Naive thymus-derived CD4-positive, alpha-beta T cell (primary cell): ENCODE measurements at regions of chr17 and their contacts with region 1.

Region 1: DNA sequence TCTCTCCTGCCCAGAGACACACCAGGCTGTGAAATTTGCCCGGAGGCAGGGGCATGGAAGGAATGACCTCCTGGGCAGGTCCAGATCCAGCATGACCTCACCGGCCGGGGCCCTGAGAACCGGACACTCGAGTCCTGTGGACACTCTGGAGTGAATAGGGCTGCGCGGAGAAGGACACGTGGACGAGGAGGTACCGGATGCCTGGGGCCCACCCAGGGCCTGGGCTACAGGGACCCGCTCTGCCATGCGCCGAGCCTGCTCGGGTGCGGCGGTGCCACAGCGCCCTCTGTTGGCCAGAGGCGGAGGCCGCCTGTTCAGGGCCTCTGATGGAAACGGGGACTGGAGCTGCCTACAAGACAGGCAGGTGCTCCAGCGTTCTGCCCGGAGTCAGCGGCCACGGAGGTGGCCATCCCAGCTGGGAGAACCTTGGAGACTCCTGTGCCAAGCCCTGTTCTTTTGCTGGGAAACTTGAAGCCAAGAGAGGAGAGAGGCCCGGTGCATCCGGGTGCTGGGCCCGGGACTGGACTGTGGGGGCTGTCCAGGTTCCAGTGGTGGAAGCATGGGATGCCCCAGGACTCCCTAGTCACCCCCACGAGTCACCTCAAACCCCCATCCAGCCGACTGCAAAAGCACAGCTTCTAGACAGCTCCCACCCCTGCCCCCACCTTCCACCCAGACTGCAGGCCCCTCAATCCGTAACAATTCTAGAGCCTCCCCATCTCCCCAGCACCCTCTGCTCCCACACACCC is 19.3 kb upstream of the NXPH3 start:
- DNase-seq: peak; percentile 61 to 89 (median 81)
- ATAC-seq: peak; percentile 96
- H3K4me3 ChIP-seq: no peak overlapping the region
- H3K4me3 Mint-ChIP-seq: peak overlapping the region in 1 of 10 donors; percentile 52
- H3K27ac ChIP-seq: no peak overlapping the region
- H3K27ac Mint-ChIP-seq: no peak overlapping the region
- H3K4me1 ChIP-seq: peaks cover 0 to 3% of the 10 kb centered on the region in 2 donors
- H3K4me1 Mint-ChIP-seq: peaks cover 6 to 13% (median 10%) of the 10 kb centered on the region in 7 donors
- H3K27me3 ChIP-seq: peaks cover 0 to 3% of the 10 kb centered on the region in 2 donors
- H3K27me3 Mint-ChIP-seq: peaks cover 0 to 13% (median 5%) of the 10 kb centered on the region in 5 donors

Region 2: DNA sequence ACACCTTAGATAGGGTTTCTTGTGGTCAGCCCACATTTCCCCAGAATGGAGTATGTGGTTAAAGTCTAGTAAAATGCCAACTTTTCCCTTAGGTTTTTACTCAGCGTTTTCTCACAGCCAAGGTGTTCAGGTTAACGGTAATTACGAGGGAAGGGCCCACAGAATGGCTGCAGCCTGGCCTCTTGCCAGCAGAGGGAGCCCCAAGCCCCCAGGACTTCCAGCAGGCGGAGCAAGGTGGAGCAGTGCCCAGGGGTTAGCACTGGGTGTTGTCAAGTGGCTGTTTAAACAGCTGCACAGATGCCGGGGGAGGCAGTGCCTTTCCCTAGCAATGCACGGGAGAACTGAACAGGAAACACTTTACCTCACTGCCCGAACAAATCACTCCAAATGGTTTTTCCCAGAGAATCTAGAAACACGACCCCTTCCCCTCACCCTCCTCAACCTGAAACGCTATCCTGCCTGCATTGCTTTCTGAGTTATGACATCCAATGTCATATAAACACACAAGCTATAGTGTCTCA is 148.4 kb before region 1 on chr17:
- CTCF ChIA-PET with region 1: interaction called, 40 read pairs
- POLR2A ChIA-PET with region 1: interaction called, 5 read pairs
- intact Hi-C with region 1: loop called (anchors 1 kb)
- DNase-seq: peak; percentile 67 to 85 (median 81)
- ATAC-seq: peak; percentile 98
- H3K4me3 ChIP-seq: no peak overlapping the region
- H3K4me3 Mint-ChIP-seq: no peak overlapping the region
- H3K27ac ChIP-seq: no peak overlapping the region
- H3K27ac Mint-ChIP-seq: peak overlapping the region in 4 of 9 donors; percentile 12 to 66 (median 50)
- H3K4me1 ChIP-seq: peaks cover 0 to 20% of the 10 kb centered on the region in 2 donors
- H3K4me1 Mint-ChIP-seq: peaks cover 17 to 36% (median 31%) of the 10 kb centered on the region in 7 donors
- H3K27me3 ChIP-seq: no peaks in the 10 kb centered on the region
- H3K27me3 Mint-ChIP-seq: no peaks in the 10 kb centered on the region

Region 3: GRCh38 chr17:49434821-49435670 is 121.4 kb before region 1 on chr17:
- CTCF ChIA-PET with region 1: interaction called, 28 read pairs
- POLR2A ChIA-PET with region 1: no interaction called
- intact Hi-C with region 1: loop called in 1 of 2 experiments (anchors 1 kb)
- DNase-seq: peak in 4 of 9 donors; percentile 18 to 39 (median 30)
- ATAC-seq: peak; percentile 49
- H3K4me3 ChIP-seq: no peak overlapping the region
- H3K4me3 Mint-ChIP-seq: no peak overlapping the region
- H3K27ac ChIP-seq: no peak overlapping the region
- H3K27ac Mint-ChIP-seq: no peak overlapping the region
- H3K4me1 ChIP-seq: no peaks in the 10 kb centered on the region
- H3K4me1 Mint-ChIP-seq: peaks cover 0 to 3% (median 0%) of the 10 kb centered on the region in 7 donors
- H3K27me3 ChIP-seq: peaks cover 0 to 8% of the 10 kb centered on the region in 2 donors
- H3K27me3 Mint-ChIP-seq: peaks cover 15 to 43% (median 32%) of the 10 kb centered on the region in 5 donors

Region 4: DNA sequence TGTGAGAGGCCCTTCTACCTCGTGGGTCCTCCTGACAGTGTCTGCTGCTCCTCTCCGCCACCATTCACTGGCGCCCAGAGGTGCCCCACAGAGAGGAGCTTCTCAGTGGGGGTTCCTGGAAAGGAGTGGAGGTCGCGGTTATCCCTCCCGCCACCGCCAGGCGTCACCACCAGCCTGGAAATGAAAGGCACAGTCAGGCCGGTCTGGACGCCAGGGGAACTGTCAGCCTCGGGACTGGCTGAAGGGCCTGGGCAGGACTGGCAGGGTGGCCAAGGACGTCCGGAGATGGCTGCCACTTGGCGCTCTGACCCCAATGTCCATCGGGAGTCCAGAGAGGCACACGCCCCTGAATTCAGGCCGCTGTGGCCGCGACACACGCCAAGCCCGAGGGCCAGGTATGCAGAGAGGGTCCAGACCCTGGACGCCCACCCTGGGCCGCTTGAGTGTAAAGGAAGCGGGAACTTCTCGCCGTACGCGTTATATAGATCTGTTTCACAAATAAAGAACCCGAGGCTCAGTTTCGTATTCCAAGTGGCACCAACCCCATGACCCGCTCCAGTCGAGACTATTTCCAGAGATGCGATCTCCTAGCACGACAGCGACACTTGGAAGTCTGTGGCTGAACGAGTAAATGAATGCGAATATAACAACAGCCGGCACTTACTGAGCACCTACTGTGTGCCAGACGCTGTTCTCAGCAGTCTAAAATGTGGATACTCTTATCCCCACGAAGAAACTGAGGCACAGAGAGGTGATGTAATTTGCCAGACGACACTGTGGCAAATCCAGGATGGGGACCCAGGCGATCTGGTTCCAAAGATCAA is 11.7 kb after region 1 on chr17:
- CTCF ChIA-PET with region 1: interaction called, 11 read pairs
- POLR2A ChIA-PET with region 1: interaction called, 3 read pairs
- intact Hi-C with region 1: no loop called
- DNase-seq: peak; percentile 50 to 88 (median 72)
- ATAC-seq: peak; percentile 64
- H3K4me3 ChIP-seq: peak overlapping the region; percentile 15
- H3K4me3 Mint-ChIP-seq: peak overlapping the region; percentile 53 to 80 (median 70)
- H3K27ac ChIP-seq: no peak overlapping the region
- H3K27ac Mint-ChIP-seq: peak overlapping the region in 1 of 9 donors; percentile 7
- H3K4me1 ChIP-seq: peaks cover 6 to 7% of the 10 kb centered on the region in 2 donors
- H3K4me1 Mint-ChIP-seq: peaks cover 0 to 28% (median 15%) of the 10 kb centered on the region in 7 donors
- H3K27me3 ChIP-seq: no peaks in the 10 kb centered on the region
- H3K27me3 Mint-ChIP-seq: peaks cover under 1 to 38% (median 4%) of the 10 kb centered on the region in 5 donors

Region 5: DNA sequence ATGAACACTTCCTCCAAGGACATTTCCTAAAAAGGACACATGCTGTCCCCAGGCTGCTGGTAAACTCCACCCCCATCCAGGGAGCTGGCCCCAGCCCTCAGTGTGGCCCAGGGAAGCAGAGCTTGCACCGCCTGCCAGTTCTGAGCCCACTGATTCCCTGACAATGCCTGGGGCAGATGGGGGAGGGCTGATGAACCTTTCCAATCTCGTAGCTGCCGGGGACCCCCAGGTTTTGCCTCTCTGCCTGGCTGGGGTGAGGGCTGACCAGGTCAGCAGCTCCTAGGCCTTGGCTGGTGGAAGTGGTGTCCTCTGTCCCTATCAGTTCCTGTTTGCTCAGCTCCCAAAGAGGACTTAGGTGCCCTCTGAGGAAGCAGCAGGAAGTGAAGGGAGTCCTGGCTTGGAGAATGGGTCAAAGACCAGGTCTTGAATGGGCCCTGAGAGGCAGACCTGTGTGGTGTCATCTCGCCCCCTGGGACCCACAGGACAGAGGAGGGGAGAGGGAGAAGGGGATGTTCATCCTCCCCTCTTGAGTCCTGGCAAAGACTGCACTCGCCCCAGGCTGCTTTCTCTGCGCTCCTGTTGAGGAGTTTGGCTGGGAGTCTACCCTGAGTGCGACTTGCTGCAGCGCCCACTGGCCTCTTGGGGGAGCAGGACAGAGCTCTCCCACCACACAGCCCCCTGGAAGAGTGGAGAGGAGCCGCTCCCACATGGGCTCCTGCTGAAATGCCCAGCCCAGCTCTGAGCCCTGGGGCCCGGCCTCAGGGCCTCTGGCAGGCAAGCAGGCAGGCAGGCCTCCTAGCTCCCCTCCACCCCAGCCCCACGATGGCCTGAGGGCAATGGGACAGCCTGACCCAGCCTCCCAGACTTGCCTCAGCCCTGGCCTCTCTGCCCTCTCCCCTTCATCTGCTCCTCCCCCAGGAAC is 555.6 kb after region 1 on chr17:
- CTCF ChIA-PET with region 1: no interaction called
- POLR2A ChIA-PET with region 1: no interaction called
- intact Hi-C with region 1: no loop called
- DNase-seq: no peak
- ATAC-seq: no peak
- H3K4me3 ChIP-seq: no peak overlapping the region
- H3K4me3 Mint-ChIP-seq: no peak overlapping the region
- H3K27ac ChIP-seq: no peak overlapping the region
- H3K27ac Mint-ChIP-seq: peak overlapping the region in 1 of 9 donors; percentile 42
- H3K4me1 ChIP-seq: no peaks in the 10 kb centered on the region
- H3K4me1 Mint-ChIP-seq: peaks cover 7 to 15% (median 10%) of the 10 kb centered on the region in 7 donors
- H3K27me3 ChIP-seq: peaks cover 2 to 8% of the 10 kb centered on the region in 2 donors
- H3K27me3 Mint-ChIP-seq: peaks cover 6 to 21% (median 13%) of the 10 kb centered on the region in 5 donors